A673 (cell line): ENCODE measurements at regions of chr3 and their contacts with region 1.

Region 1: DNA sequence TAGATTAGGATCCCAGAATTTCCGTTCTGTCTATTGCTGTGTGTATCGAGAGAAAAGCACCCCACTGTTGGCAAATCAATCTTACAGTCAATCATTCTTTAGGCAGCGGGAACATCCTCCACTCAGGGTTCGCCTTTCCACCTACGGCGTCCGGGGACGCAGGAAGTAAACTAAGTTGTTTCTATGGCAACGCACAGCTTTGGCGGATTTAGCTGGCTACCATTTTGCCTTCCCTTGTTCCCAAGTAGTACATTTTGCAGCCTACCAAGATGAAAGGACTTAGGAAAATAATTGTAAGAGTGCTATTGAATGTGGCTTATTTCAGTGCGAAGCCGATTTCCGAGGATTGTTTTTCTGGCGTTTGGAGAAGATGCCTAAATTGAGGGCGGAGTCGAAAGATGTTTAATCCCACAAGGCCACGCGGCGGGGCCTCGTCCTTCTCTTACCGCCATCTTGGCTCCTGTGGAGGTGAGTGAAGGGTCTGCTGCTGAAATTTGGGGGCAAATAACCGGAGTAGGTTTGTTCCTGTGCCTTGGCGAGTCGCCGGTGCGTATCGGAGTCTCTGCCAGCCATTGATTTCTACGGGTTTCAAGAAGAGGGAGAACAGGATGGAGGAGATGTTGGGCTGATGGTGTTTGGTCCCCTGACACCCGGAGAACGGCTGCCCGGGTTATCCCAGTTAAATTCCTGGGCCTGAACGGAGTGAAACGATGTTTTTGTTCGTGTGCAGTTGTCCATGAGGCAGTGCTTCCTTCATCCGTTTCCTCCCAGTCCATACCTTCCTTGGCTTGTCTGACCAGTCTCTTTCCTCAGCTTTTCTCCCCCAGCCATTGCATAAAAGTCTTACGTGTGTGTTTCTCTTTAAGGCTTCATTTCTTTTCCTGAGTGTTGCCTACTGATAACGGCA is at the start of gene RPL35A:
- DNase-seq: peak; percentile 97
- H3K4me3 ChIP-seq: peak within 1 kb of the TSS; percentile 77
- H3K27ac ChIP-seq: peak within 1 kb of the TSS; percentile 96
- H3K4me1 ChIP-seq: peaks cover 21% of the 10 kb centered on the region
- H3K27me3 ChIP-seq: no peaks in the 10 kb centered on the region
- CTCF ChIP-seq: no peak
- total RNA-seq, gene RPL35A: 1,052 and 1,102 TPM in 2 replicates

Region 2: DNA sequence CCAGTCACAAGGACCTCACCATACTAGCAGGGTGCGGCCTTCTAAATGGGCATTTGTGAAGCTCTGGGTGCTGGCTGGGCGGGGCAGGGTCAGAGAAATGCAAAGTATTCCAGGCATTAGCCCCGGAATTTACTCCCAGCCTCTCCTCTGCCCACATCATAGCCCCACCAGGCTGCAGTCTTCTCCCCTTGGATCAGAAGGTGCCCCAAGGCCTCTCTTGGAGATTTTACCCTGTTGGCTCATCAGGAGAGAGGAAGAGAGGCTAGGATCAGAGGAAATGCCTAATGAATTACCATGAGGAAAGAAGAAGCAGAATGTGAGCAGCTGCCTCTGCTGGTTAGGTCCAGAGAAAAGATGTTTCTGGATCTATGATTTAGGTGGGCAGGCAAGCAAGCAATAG is 459.9 kb before region 1 on chr3:
- CTCF ChIA-PET with region 1: no interaction called
- POLR2A ChIA-PET with region 1: no interaction called
- intact Hi-C with region 1: no loop called
- DNase-seq: no peak
- H3K4me3 ChIP-seq: no peak overlapping the region
- H3K27ac ChIP-seq: no peak overlapping the region
- H3K4me1 ChIP-seq: peaks cover 4% of the 10 kb centered on the region
- H3K27me3 ChIP-seq: no peaks in the 10 kb centered on the region
- CTCF ChIP-seq: no peak

Region 3: DNA sequence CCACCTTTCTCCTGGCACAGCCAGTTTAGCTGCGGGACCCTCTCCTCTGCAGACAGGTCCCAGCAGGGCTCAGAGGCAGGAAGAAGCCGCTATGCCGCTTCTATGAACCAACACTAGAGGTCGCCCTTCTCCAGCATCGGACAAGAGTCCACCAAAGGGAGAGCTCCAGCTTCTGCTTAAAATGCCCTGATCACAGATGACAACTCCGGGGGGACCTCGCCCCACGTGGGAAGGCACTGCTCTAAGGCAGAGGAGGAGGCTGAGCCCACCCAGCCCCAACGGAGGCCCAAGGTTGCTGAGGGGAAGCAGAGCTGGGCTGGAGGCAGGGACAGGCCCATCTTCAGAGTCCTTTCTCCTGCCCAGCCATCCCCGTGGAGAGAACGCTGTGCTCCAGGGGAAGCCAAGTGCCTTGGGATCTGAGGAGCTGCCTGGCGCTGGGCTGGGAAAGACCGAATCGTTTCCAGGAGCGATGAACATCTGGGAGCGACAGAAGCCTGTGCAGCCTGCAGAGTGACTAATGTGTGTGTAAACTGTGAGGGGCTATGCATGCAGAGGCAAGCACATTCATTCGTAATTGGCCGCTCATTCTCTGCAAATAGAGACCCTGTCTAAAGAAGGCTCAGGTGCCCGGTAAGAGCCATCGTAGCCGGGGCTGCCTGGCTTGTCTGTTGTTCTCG is 350.8 kb before region 1 on chr3:
- CTCF ChIA-PET with region 1: no interaction called
- POLR2A ChIA-PET with region 1: no interaction called
- intact Hi-C with region 1: loop called (anchors 10 kb)
- DNase-seq: peak; percentile 94
- H3K4me3 ChIP-seq: peak overlapping the region; percentile 24
- H3K27ac ChIP-seq: no peak overlapping the region
- H3K4me1 ChIP-seq: peaks cover 5% of the 10 kb centered on the region
- H3K27me3 ChIP-seq: no peaks in the 10 kb centered on the region
- CTCF ChIP-seq: peak; percentile 93